ENCODE measurements at regions of chr11 and their contacts with region 1.

Region 1: GRCh38 chr11:78188286-78189173 is at the starts of genes KCTD21 and USP35:
- DNase-seq: peak; percentile 95
- H3K4me3 Mint-ChIP-seq: peak within 1 kb of the TSS; percentile 98
- H3K27ac Mint-ChIP-seq: peak within 1 kb of the TSS; percentile 98
- H3K4me1 Mint-ChIP-seq: peaks cover 57% of the 10 kb centered on the region
- H3K27me3 Mint-ChIP-seq: no peaks in the 10 kb centered on the region
- total RNA-seq, gene KCTD21: 7.9 to 8.8 TPM
- total RNA-seq, gene USP35: 9.3 to 9.6 TPM

Region 2: GRCh38 chr11:77820563-77821348 is 367.8 kb before region 1 on chr11 and contains the starts of genes AAMDC and RSF1:
- CTCF ChIA-PET with region 1: no interaction called
- POLR2A ChIA-PET with region 1: interaction called, 3 read pairs
- intact Hi-C with region 1: loop called (anchors 5 kb)
- DNase-seq: peak; percentile 98
- H3K4me3 Mint-ChIP-seq: peak within 1 kb of the TSS; percentile 97
- H3K27ac Mint-ChIP-seq: peak within 1 kb of the TSS; percentile 98
- H3K4me1 Mint-ChIP-seq: peaks cover 34% of the 10 kb centered on the region
- H3K27me3 Mint-ChIP-seq: no peaks in the 10 kb centered on the region
- total RNA-seq, gene AAMDC: 9.5 to 10.0 TPM
- total RNA-seq, gene RSF1: 48.7 to 52.9 TPM

Region 3: DNA sequence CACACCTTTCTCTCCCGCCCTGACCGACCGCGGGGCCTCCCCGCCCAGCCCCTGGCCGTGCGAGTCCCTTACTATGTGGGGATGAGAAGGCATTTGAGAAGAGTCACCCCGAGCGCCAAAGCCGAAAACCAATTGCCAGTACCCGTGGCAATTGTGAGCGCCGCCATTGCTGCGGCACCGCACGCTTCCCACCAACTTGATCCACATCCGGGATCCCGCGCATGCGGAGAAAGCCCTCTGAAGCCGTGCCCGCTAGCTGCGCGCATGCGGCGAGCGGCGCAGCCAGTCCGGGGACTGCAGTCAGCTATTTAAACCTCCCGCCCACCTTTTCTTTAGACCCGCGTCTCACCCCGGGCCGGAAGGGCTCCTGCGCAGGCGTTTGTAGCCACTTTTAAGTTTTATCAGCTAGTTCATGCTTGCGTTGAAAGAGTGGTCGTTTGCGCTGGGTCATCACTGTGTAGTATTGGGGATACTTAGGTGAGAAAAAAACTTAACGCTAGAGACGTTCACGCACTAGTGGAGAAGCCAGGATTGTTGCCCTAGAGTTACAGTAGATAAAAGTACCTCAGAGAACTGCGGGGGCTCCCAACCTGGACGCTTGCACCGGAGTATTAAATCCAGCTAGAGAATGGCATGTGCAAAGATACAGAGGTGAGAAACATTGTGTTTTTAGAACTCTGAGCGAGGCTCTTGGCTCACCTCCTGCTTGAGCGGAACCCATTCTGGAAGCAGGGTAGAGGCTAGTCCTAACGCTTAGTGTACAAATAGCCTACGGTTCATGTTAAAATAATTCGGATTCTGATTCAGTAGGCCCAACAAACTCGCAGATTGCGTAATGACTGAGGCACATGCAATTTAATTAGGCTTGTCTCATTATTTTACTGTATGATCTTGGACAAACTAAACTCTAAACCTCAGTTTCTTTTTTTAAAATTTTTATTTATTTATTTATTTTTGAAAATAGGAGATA is 48.8 kb before region 1 on chr11 and contains the start of gene ALG8:
- CTCF ChIA-PET with region 1: interaction called, 4 read pairs
- POLR2A ChIA-PET with region 1: interaction called, 11 read pairs
- intact Hi-C with region 1: loop called (anchors 1 kb)
- DNase-seq: peak; percentile 98
- H3K4me3 Mint-ChIP-seq: peak within 1 kb of the TSS; percentile 81
- H3K27ac Mint-ChIP-seq: peak within 1 kb of the TSS; percentile 93
- H3K4me1 Mint-ChIP-seq: peaks cover 34% of the 10 kb centered on the region
- H3K27me3 Mint-ChIP-seq: no peaks in the 10 kb centered on the region
- total RNA-seq, gene ALG8: 45.8 to 45.9 TPM

Region 4: DNA sequence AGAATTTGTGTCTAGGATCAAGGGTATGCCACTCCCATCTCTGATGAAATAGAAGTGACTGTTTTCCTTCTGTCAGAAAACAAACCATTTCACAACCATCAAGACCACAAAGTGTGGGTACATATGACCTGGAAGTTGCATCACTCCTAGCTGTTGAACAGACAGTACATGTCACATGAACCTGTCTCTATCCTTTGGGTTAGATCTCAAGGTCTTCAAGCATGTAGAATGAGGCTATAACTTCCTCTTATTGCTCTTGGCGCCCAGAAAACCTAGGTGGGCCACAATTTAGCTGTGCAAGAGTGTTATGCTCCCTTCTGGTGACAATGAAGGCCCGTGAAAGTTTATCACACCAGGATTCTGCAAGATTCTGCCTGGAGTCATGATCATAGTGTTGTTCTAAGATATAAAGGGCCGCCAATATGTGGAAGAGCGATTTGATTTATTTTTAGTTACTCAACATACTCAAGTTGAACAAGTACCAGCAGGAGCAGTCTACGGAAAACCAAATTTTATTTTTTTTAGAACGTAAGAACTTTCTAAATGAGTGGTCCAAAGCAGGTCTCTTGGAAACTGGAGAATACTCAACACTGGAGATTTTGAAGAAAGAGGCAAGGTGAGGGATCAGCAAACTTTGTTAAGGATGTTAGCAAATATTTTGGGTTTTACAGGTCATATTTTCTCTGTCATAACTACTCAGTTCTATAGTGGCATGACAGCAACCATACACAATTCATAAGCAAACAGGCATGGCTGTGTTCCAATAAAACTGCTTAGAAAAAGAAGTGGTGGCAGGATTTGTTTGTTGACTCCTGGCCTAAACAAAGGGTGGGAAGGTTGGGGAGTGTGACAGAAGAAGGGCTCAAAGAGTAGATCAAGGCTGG is 102.0 kb after region 1 on chr11:
- CTCF ChIA-PET with region 1: no interaction called
- POLR2A ChIA-PET with region 1: no interaction called
- intact Hi-C with region 1: loop called (anchors 1 kb)
- DNase-seq: peak; percentile 33
- H3K4me3 Mint-ChIP-seq: peak overlapping the region; percentile 2
- H3K27ac Mint-ChIP-seq: peak overlapping the region; percentile 83
- H3K4me1 Mint-ChIP-seq: peaks cover 34% of the 10 kb centered on the region
- H3K27me3 Mint-ChIP-seq: no peaks in the 10 kb centered on the region

Region 5: GRCh38 chr11:78397387-78397786 is 208.9 kb after region 1 on chr11:
- CTCF ChIA-PET with region 1: no interaction called
- POLR2A ChIA-PET with region 1: no interaction called
- intact Hi-C with region 1: no loop called
- DNase-seq: no peak
- H3K4me3 Mint-ChIP-seq: no peak overlapping the region
- H3K27ac Mint-ChIP-seq: no peak overlapping the region
- H3K4me1 Mint-ChIP-seq: peaks cover 5% of the 10 kb centered on the region
- H3K27me3 Mint-ChIP-seq: no peaks in the 10 kb centered on the region

Region 6: GRCh38 chr11:78574386-78575381 is 386.2 kb after region 1 on chr11 and contains the start of gene NARS2:
- CTCF ChIA-PET with region 1: no interaction called
- POLR2A ChIA-PET with region 1: interaction called, 4 read pairs
- intact Hi-C with region 1: loop called (anchors 1 kb)
- DNase-seq: peak; percentile 99
- H3K4me3 Mint-ChIP-seq: peak within 1 kb of the TSS; percentile 96
- H3K27ac Mint-ChIP-seq: peak within 1 kb of the TSS; percentile 92
- H3K4me1 Mint-ChIP-seq: peaks cover 21% of the 10 kb centered on the region
- H3K27me3 Mint-ChIP-seq: no peaks in the 10 kb centered on the region
- total RNA-seq, gene NARS2: 22.7 to 24.6 TPM